ENCODE measurements at regions of chr6 and their contacts with region 1.

Region 1: DNA sequence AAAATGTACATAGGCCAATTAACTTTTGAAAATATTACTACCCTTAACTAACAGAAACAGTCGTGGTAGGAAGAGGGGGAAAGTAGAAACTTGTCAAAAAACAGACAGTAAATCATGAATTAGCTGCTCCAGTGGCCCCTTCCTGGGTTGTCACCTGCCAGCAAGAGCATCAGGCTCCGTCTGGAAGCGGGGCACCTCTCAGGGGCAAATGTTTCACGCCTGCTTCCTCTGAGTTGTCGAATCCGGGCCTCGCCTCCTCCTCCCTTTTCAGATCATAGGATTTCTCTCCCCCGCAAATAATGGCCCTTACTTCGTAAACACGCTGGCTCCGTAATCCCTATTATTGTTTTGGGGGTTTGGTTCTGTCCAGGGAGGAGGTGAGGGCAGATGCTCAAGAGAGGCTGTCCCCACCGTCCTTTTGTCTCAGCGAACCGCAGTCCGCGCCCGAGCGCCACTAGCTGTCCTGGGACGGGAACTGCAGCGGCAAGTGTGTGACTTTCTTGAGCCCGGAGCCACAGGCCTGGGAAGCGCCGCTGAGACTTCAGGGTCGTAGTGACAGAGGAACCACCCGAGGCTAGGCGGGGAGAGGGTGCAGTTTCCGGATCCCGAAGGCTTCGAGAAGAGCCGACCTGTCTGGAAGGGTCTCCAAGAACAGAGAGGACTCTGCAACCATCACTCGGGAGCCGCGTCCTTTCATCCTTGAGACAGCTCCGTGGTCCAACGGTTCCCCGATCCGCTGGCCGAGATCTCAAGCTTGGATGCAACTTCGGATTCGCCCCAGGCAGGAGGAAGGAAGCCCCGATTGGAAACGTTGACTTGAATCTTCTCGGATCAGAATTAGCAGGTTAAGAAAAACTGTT is 214.5 kb upstream of the ZNF184 start:
- DNase-seq: peak; percentile 90
- H3K4me3 Mint-ChIP-seq: peak overlapping the region; percentile 87
- H3K27ac Mint-ChIP-seq: peak overlapping the region; percentile 84
- H3K4me1 Mint-ChIP-seq: peaks cover 14% of the 10 kb centered on the region
- H3K27me3 Mint-ChIP-seq: peaks cover 15% of the 10 kb centered on the region

Region 2: DNA sequence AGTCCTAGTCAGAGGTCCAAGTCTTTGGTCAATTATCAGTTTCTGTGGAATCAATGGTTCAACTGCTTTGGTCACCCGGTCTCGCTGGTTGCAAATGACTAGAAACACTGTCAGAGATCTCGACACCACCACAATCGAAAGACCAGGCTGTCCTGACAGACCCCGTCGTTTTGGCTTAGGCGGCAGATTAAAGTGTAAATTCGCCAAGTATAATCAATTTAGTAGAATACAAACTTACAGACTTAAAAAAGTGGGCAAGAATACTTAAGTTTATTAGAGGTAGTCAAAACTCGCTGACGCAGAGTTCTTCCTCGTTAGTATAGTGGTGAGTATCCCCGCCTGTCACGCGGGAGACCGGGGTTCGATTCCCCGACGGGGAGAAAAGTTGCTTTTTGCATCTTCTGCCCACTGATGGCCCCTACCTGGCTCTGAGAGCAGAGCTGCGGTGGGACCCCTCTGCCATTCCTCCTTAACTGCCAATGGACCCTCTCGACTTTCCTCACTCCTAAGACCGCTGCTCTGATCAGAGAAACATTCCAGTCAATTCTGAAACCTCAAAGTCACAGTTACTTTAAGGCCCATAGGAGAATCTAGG is 183.9 kb before region 1 on chr6:
- CTCF ChIA-PET with region 1: no interaction called
- POLR2A ChIA-PET with region 1: no interaction called
- intact Hi-C with region 1: loop called (anchors 2 kb)
- DNase-seq: peak; percentile 86
- H3K4me3 Mint-ChIP-seq: peak overlapping the region; percentile 88
- H3K27ac Mint-ChIP-seq: peak overlapping the region; percentile 85
- H3K4me1 Mint-ChIP-seq: peaks cover 26% of the 10 kb centered on the region
- H3K27me3 Mint-ChIP-seq: peaks cover 10% of the 10 kb centered on the region

Region 3: DNA sequence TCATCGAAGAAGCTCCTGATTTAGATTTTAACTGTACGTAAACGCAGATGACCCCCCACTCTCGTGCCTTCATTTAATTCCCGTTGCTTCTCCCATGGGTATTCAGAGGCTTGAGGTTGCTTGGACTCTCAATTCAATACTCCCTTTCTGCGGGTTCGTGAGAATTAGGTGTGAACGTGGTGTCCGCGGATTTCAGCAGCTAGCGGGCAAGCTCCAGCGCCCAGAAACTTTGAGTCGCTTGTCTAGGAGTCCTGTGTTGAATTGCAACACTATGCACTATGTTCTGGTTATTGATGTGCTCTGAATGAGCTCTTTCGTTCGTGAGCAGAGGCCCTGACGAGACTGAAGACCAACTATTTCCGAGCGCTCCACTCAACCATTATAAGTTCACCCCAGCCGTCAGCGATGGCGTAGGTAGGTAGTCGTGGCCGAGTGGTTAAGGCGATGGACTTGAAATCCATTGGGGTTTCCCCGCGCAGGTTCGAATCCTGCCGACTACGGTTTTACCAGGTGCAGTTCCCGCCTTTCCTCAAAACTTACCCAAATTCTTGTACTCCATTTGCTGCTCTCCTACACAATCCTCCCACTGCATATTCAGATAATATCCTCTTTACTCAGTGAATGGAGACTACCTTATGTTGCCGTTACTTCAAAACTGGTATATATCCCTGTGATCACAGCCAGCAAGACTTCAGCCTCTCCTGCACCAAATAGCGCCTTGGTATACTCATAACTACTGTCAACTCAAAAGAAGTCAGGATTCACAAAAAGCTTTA is 141.9 kb before region 1 on chr6:
- CTCF ChIA-PET with region 1: no interaction called
- POLR2A ChIA-PET with region 1: no interaction called
- intact Hi-C with region 1: loop called (anchors 5 kb)
- DNase-seq: peak; percentile 70
- H3K4me3 Mint-ChIP-seq: peak overlapping the region; percentile 57
- H3K27ac Mint-ChIP-seq: no peak overlapping the region
- H3K4me1 Mint-ChIP-seq: peaks cover 14% of the 10 kb centered on the region
- H3K27me3 Mint-ChIP-seq: peaks cover 83% of the 10 kb centered on the region

Region 4: GRCh38 chr6:27672113-27672799 is 15.1 kb before region 1 on chr6:
- CTCF ChIA-PET with region 1: interaction called, 6 read pairs
- POLR2A ChIA-PET with region 1: interaction called, 3 read pairs
- intact Hi-C with region 1: loop called (anchors 2 kb)
- DNase-seq: peak; percentile 60
- H3K4me3 Mint-ChIP-seq: peak overlapping the region; percentile 42
- H3K27ac Mint-ChIP-seq: no peak overlapping the region
- H3K4me1 Mint-ChIP-seq: peaks cover 30% of the 10 kb centered on the region
- H3K27me3 Mint-ChIP-seq: peaks cover 74% of the 10 kb centered on the region

Region 5: DNA sequence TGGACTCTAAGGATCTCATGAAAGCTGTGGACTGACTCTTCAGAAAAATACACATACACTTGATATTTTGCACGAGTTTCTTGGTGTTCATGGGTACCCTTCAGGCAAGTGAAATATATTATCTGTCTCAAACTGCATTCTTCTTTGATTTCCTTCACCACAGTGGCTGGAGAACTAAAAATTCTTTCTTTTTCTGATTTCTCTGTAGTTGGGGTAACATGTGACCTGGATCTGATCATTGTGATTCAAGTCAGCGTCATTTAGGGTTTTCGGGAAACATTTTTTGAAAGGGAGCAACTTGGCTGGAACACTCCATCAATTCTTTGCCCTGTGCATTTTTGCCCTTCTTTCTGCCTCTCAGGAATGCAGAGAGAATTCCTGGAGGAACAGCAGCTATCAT is 19.0 kb after region 1 on chr6:
- CTCF ChIA-PET with region 1: no interaction called
- POLR2A ChIA-PET with region 1: no interaction called
- intact Hi-C with region 1: no loop called
- DNase-seq: no peak
- H3K4me3 Mint-ChIP-seq: no peak overlapping the region
- H3K27ac Mint-ChIP-seq: no peak overlapping the region
- H3K4me1 Mint-ChIP-seq: no peaks in the 10 kb centered on the region
- H3K27me3 Mint-ChIP-seq: no peaks in the 10 kb centered on the region

Region 6: GRCh38 chr6:27809939-27810767 is 122.8 kb after region 1 on chr6:
- CTCF ChIA-PET with region 1: no interaction called
- POLR2A ChIA-PET with region 1: no interaction called
- intact Hi-C with region 1: no loop called
- DNase-seq: peak; percentile 82
- H3K4me3 Mint-ChIP-seq: peak overlapping the region; percentile 85
- H3K27ac Mint-ChIP-seq: peak overlapping the region; percentile 96
- H3K4me1 Mint-ChIP-seq: peaks cover 61% of the 10 kb centered on the region
- H3K27me3 Mint-ChIP-seq: peaks cover 4% of the 10 kb centered on the region

Region 7: GRCh38 chr6:27902335-27903314 is 215.2 kb after region 1 on chr6:
- CTCF ChIA-PET with region 1: no interaction called
- POLR2A ChIA-PET with region 1: no interaction called
- intact Hi-C with region 1: loop called (anchors 1 kb)
- DNase-seq: peak; percentile 92
- H3K4me3 Mint-ChIP-seq: peak overlapping the region; percentile 79
- H3K27ac Mint-ChIP-seq: peak overlapping the region; percentile 91
- H3K4me1 Mint-ChIP-seq: peaks cover 11% of the 10 kb centered on the region
- H3K27me3 Mint-ChIP-seq: peaks cover 13% of the 10 kb centered on the region

Measured in activated CD4-positive, alpha-beta memory T cell treated with anti-CD3 and anti-CD28 coated beads for 36 hours (primary cell).